ENCODE measurements at regions of chr14 and their contacts with region 1.

Region 1: DNA sequence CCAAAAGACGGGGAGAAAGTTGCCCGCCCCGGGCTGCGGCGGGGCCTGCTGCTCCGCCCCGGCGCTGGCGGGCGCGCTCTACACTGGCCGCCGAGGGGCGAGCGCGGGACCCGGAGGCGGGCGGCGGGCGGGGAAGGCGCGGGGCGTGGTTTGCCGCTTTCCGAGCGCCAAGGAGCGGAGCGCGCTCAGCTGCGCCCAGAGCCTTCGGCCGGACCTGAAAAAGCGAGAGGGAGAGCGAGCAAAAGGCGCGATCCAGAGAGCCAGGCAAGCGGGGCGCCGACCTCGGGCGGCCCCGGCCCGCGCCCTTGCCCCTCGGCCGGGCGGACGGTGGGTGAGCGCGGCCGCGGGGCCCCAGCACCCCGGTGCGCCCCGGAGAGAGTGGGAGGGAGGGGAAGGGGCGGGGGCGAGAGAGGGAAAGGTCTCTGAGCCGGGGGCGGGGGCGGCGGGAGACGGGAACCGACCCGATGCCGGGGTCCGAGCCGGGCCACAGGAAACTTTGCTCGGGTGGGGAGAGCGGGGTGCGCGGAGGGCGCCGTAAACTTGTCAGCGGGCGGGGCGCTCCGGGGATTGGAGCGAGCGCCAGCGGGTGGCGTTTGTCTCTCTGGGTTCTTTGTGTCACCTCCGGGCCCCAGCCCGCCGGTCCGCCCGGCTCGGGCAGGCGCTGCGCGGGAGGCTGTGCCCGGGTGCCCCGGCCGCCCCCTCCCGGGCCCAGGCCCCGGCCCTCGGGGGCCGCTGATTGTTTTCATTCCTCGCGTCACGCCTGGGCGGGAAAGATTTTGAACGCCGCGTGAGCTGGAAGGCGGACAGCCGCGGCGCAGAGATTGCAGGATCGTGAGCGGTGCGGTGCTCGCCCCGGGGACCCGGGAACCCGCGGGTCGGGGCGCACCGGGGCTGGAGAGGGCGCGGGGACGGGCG is at the start of gene SYNE2:
- DNase-seq: peak; percentile 61 to 90 (median 79)
- ATAC-seq: peak; percentile 85 to 89 (median 88)
- H3K4me3 ChIP-seq: peak within 1 kb of the TSS; percentile 87 to 92
- H3K4me3 Mint-ChIP-seq: peak within 1 kb of the TSS; percentile 91 to 97 (median 97)
- H3K27ac ChIP-seq: peak within 1 kb of the TSS; percentile 83
- H3K27ac Mint-ChIP-seq: peak within 1 kb of the TSS; percentile 89 to 94
- H3K4me1 ChIP-seq: peaks cover 12 to 40% of the 10 kb centered on the region in 2 experiments
- H3K4me1 Mint-ChIP-seq: peaks cover 39 to 43% (median 40%) of the 10 kb centered on the region in 3 donors
- H3K27me3 ChIP-seq: no peaks in the 10 kb centered on the region
- H3K27me3 Mint-ChIP-seq: no peaks in the 10 kb centered on the region
- total RNA-seq, gene SYNE2: 150 to 321 (median 229) TPM

Region 2: GRCh38 chr14:63777024-63777423 is 76.0 kb before region 1 on chr14:
- CTCF ChIA-PET with region 1: no interaction called
- POLR2A ChIA-PET with region 1: no interaction called
- DNase-seq: no peak
- ATAC-seq: no peak
- H3K4me3 ChIP-seq: no peak overlapping the region
- H3K4me3 Mint-ChIP-seq: no peak overlapping the region
- H3K27ac ChIP-seq: no peak overlapping the region
- H3K27ac Mint-ChIP-seq: no peak overlapping the region
- H3K4me1 ChIP-seq: no peaks in the 10 kb centered on the region
- H3K4me1 Mint-ChIP-seq: no peaks in the 10 kb centered on the region
- H3K27me3 ChIP-seq: no peaks in the 10 kb centered on the region
- H3K27me3 Mint-ChIP-seq: no peaks in the 10 kb centered on the region

Region 3: DNA sequence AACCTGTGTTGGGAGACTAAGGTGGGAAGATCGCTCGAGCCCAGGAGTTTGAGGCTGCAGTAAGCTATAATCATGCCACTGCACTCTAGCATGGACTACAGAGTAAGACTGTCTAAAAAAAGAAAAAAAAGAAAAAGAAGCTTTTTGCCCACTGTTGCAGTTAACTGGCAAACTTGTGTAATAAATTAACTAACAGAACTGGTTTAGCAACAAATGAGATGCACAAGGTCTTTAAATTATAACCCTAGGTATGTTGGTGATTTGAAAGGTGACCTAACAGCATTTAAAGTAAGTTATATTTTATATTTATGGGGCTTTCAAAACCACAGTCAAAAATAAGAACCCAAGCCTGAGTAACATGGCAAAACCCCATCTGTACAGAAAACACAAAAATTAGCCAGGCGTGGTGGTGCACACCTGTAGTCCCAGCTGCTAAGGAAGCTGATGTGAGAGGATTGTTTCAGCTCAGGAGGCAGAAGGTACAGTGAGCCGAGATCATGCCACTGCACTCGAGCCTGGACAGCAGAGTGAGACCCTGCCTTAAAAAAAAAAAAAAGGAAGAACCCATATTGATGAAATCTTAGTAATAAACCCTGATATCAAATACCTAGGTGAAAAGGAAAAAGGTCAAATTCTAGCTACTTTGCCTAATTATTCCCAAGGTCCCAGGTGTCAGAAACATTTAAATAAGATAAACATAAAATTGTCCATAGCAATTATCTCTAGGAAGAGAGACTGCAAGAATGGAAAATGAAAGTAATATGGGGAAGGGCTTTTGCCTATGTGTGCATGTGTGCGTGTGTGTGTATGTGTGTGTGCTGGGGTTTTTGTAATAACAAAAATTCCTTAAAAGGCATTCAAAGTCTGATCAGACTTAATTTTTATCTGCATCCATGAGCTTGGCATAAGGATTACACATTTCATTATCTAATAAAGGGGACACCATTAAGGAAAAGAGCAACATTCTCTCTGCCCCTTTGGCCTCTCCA is 15.2 kb after region 1 on chr14:
- CTCF ChIA-PET with region 1: interaction called in 1 of 2 experiments, 16 read pairs
- POLR2A ChIA-PET with region 1: interaction called, 8 to 19 read pairs
- DNase-seq: peak in 11 of 35 experiments; percentile 3 to 58 (median 10)
- ATAC-seq: no peak
- H3K4me3 ChIP-seq: no peak overlapping the region
- H3K4me3 Mint-ChIP-seq: peak overlapping the region; percentile 37 to 66 (median 65)
- H3K27ac ChIP-seq: peak overlapping the region; percentile 52
- H3K27ac Mint-ChIP-seq: peak overlapping the region; percentile 93 to 100
- H3K4me1 ChIP-seq: peaks cover 17 to 56% of the 10 kb centered on the region in 2 experiments
- H3K4me1 Mint-ChIP-seq: peaks cover 72 to 79% (median 73%) of the 10 kb centered on the region in 3 donors
- H3K27me3 ChIP-seq: no peaks in the 10 kb centered on the region
- H3K27me3 Mint-ChIP-seq: no peaks in the 10 kb centered on the region

Region 4: DNA sequence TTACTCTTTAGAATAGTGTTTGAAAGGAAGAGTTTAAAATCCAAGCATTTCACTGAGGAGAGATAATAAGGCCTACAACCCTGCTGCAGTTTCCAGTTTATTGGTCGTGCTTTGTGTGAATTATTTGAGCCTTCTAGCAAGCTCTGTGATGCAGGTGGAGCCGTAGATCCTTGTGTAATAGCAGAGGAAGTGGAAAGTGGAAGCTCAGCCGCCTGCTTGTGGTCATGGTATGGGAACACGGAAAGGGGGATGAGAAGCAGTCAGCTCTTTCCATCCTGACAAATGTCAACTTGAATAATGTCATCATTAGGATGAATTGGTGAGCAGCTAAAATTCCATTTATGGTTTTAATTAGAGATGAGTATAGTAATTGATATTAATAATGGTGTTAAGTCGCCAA is 28.9 kb after region 1 on chr14:
- CTCF ChIA-PET with region 1: interaction called in 1 of 2 experiments, 4 read pairs
- POLR2A ChIA-PET with region 1: interaction called in 1 of 2 experiments, 10 read pairs
- DNase-seq: no peak
- ATAC-seq: no peak
- H3K4me3 ChIP-seq: no peak overlapping the region
- H3K4me3 Mint-ChIP-seq: no peak overlapping the region
- H3K27ac ChIP-seq: no peak overlapping the region
- H3K27ac Mint-ChIP-seq: no peak overlapping the region
- H3K4me1 ChIP-seq: peaks cover 0 to 7% of the 10 kb centered on the region in 2 experiments
- H3K4me1 Mint-ChIP-seq: peaks cover 26 to 67% (median 51%) of the 10 kb centered on the region in 3 donors
- H3K27me3 ChIP-seq: no peaks in the 10 kb centered on the region
- H3K27me3 Mint-ChIP-seq: no peaks in the 10 kb centered on the region

Region 5: DNA sequence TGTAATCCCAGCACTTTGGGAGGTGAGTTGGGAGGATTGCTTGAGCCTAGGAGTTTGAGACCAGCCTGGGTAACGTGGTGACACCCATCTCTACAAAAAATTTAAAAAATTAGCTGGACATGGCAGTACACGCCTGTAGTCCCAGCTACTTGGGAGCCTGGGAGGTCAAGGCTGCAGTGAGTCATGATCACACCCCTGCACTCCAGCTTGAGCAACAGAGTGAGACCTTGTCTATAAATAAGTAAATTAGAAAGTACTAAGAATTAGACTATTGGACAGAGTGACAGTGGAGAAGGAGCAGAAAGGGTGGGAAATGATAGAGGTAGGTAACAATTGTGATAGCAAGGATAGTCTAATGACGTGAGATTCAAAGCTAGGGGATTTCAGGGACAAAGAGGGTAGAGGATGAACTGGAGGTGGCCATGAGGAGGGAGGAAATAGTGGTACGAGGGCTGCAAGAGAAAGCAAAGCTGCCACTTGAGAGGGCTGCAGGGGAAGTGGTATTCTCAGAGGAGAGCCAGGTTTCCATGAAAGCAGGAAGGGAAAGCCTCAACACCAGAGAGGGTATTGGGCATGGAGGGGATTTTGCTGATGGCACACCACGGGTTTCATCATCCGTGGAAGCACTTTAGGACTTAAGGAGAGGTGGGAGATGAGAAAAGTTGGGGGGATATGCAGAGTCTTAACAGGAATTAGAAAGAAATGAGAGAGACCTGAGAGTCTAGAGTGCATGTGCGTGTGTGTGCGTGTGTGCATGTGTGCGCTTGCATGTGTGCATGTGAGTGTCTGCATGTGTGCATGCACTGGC is 85.3 kb after region 1 on chr14:
- CTCF ChIA-PET with region 1: no interaction called
- POLR2A ChIA-PET with region 1: interaction called in 1 of 2 experiments, 10 read pairs
- DNase-seq: peak in 18 of 35 experiments; percentile 1 to 43 (median 10)
- ATAC-seq: peak; percentile 44 to 80 (median 64)
- H3K4me3 ChIP-seq: no peak overlapping the region
- H3K4me3 Mint-ChIP-seq: no peak overlapping the region
- H3K27ac ChIP-seq: peak overlapping the region; percentile 55
- H3K27ac Mint-ChIP-seq: no peak overlapping the region
- H3K4me1 ChIP-seq: peaks cover 36 to 39% of the 10 kb centered on the region in 2 experiments
- H3K4me1 Mint-ChIP-seq: peaks cover 37 to 50% (median 41%) of the 10 kb centered on the region in 3 donors
- H3K27me3 ChIP-seq: no peaks in the 10 kb centered on the region
- H3K27me3 Mint-ChIP-seq: no peaks in the 10 kb centered on the region

Region 6: GRCh38 chr14:64246688-64247087 is 393.6 kb after region 1 on chr14:
- CTCF ChIA-PET with region 1: interaction called in 1 of 2 experiments, 19 read pairs
- POLR2A ChIA-PET with region 1: no interaction called
- DNase-seq: no peak
- ATAC-seq: no peak
- H3K4me3 ChIP-seq: no peak overlapping the region
- H3K4me3 Mint-ChIP-seq: no peak overlapping the region
- H3K27ac ChIP-seq: no peak overlapping the region
- H3K27ac Mint-ChIP-seq: no peak overlapping the region
- H3K4me1 ChIP-seq: no peaks in the 10 kb centered on the region
- H3K4me1 Mint-ChIP-seq: no peaks in the 10 kb centered on the region
- H3K27me3 ChIP-seq: peaks cover 0 to 11% of the 10 kb centered on the region in 2 experiments
- H3K27me3 Mint-ChIP-seq: peaks cover 20 to 33% of the 10 kb centered on the region in 2 donors

Measured in T-cell (primary cell).